ENCODE measurements at regions of chr10 and their contacts with region 1.

Region 1: GRCh38 chr10:77377678-77378352 is 259.8 kb downstream of the KCNMA1 start:
- DNase-seq: no peak
- H3K4me3 ChIP-seq: no peak overlapping the region
- H3K27ac ChIP-seq: peak overlapping the region; percentile 39 to 83 (median 52)
- H3K4me1 ChIP-seq: peaks cover 0 to 5% (median 0%) of the 10 kb centered on the region in 4 donors
- H3K27me3 ChIP-seq: no peaks in the 10 kb centered on the region
- CTCF ChIP-seq: no peak
- EP300 ChIP-seq: no peak
- POLR2A ChIP-seq: no peak

Region 2: DNA sequence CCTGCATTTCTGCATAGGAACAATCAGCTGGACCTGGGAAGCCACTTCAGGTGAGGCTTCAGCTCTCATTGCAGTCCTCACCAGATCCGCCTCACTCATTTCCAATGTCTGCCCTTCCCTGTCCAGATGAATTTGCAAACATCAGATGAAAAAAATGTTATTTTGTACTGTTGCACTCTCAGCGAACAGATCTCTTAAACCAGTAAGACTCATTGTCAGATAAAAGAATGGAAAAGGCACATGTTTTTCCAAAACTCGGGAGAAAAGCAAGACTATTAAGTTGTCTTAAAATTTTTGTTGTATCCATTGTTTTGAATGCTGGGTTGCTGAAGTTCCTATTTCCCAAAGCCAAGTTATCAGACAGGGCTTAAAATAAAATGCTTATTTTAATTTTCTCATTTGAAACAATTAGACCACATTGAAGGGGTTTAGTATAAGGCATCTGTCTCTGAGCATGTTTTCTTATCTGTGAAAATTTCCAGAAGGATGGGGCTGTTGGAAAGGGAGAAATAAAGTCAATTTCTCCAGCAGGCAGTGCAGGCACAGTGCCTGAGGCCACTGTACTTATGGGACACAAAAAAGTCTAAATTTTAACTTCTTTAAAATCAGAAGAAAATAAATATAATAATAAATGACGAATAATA is 137.0 kb before region 1 on chr10:
- in situ Hi-C with region 1: no loop called
- intact Hi-C with region 1: loop called (anchors 1 kb)
- DNase-seq: no peak
- H3K4me3 ChIP-seq: no peak overlapping the region
- H3K27ac ChIP-seq: peak overlapping the region; percentile 65 to 83 (median 76)
- H3K4me1 ChIP-seq: peaks cover 6 to 25% (median 10%) of the 10 kb centered on the region in 4 donors
- H3K27me3 ChIP-seq: no peaks in the 10 kb centered on the region
- CTCF ChIP-seq: no peak
- EP300 ChIP-seq: no peak
- POLR2A ChIP-seq: no peak

Measured in transverse colon (tissue), 4 donors.